ENCODE measurements at regions of chr3 and their contacts with region 1.

Region 1: DNA sequence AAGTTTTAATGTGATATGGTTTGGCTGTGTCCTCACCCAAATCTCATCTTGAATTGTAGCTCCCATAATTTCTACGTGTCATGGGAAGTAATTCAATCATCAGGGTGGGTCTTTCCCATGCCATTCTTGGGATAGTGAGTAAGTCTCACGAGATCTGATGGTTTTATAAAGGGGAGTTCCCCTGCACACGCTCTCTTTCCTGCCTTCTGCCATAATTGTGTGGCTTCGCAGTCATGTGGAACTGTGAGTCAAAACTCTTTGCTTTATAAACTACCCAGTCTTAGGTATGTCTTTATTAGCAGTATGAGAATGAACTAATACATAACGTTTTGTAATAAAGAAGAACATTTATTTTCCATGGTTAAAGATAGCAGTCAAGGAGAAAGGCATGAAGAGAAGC is 39.2 kb upstream of the GOLIM4 start:
- DNase-seq: peak; percentile 3
- ATAC-seq: no peak
- H3K4me3 ChIP-seq: no peak overlapping the region
- H3K27ac ChIP-seq: no peak overlapping the region
- H3K4me1 ChIP-seq: 0 out of 2 replicates have a peak, but pooled peaks cover 1% of the 10 kb centered on the region
- H3K27me3 ChIP-seq: no peaks in the 10 kb centered on the region
- CTCF ChIP-seq: no peak
- POLR2A ChIP-seq: no peak
- RAD21 ChIP-seq: no peak

Region 2: DNA sequence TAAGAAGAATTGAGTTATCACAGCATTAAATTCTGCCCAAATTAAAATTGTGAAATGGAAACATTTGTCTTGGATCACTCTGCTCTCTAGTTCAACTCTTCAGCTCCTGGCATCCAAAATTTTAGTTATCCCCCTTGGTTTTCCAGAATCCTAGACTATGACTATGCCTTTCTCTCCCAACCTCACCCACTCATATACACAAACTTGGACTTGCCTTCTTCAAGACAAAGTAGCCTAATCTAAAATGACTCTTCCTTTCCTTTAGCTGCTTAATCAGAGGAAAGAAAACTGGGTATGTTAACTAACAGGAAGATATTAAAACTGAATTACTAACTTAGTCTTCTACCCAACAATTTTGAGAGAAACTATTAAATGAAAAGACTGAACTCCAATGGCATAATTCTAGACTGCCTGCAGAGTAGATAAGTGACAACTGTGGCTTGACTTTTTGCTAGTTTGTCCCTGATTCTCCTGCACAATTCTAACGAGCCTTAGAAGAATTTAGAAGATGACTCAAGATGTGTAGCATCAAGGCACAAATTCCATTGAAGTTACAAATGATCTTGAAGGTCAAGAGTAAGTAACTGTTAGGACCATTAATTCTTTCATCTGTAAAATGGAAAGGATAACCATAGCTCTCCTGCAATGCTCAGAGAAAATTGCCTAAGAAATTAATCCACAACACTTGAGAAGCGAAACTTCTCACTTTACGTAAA is 34.0 kb before region 1 on chr3:
- CTCF ChIA-PET with region 1: no interaction called
- POLR2A ChIA-PET with region 1: no interaction called
- dilution Hi-C with region 1: no loop called
- in situ Hi-C with region 1: no loop called
- intact Hi-C with region 1: loop called (anchors 5 kb)
- DNase-seq: peak; percentile 56
- ATAC-seq: peak; percentile 36
- H3K4me3 ChIP-seq: no peak overlapping the region
- H3K27ac ChIP-seq: no peak overlapping the region
- H3K4me1 ChIP-seq: no peaks in the 10 kb centered on the region
- H3K27me3 ChIP-seq: no peaks in the 10 kb centered on the region
- CTCF ChIP-seq: no peak
- POLR2A ChIP-seq: no peak
- RAD21 ChIP-seq: no peak

Region 3: DNA sequence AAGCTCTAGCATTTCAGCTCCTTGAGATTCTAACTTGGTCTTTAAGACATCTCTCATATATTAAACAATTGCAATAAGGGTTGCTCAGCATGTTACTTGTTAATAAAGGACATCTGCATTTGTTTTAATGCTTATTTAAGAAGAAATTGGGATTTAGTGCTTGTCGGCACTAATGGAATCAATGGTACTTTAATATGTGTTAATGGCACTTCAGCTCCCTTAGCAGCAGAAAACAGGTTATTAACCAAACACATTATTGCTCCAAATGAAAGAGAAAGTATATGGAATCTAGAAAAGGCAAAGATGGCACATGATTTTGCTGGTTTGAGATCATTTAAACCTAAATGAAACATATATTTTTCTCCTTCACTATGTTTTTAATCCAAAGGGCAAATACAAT is 98.1 kb after region 1 on chr3:
- CTCF ChIA-PET with region 1: no interaction called
- POLR2A ChIA-PET with region 1: no interaction called
- dilution Hi-C with region 1: no loop called
- in situ Hi-C with region 1: no loop called
- intact Hi-C with region 1: no loop called
- DNase-seq: no peak
- ATAC-seq: no peak
- H3K4me3 ChIP-seq: no peak overlapping the region
- H3K27ac ChIP-seq: no peak overlapping the region
- H3K4me1 ChIP-seq: no peaks in the 10 kb centered on the region
- H3K27me3 ChIP-seq: peaks cover 2% of the 10 kb centered on the region
- CTCF ChIP-seq: no peak
- POLR2A ChIP-seq: no peak
- RAD21 ChIP-seq: no peak

Region 4: DNA sequence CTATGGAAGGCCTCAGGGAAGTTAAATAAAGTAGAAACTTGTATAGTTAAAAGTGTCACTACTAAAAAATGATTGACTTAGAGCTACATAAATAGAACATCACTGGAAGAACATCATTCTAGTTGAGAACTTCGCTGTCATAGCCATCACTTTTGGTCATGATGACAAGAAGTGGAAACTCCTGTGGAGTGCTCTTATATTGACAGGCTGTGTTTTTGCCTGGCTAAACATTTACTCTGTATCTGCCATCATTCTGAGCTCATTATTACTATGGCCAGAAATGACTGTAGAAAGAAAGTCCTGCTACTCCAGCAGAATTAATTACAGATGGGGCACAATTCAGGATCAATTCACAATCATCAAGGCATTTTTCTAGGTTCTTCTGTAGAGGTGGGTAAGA is 125.9 kb after region 1 on chr3:
- CTCF ChIA-PET with region 1: no interaction called
- POLR2A ChIA-PET with region 1: no interaction called
- dilution Hi-C with region 1: no loop called
- in situ Hi-C with region 1: no loop called
- intact Hi-C with region 1: no loop called
- DNase-seq: no peak
- ATAC-seq: no peak
- H3K4me3 ChIP-seq: no peak overlapping the region
- H3K27ac ChIP-seq: no peak overlapping the region
- H3K4me1 ChIP-seq: no peaks in the 10 kb centered on the region
- H3K27me3 ChIP-seq: no peaks in the 10 kb centered on the region
- CTCF ChIP-seq: no peak
- POLR2A ChIP-seq: no peak
- RAD21 ChIP-seq: no peak

Measured in IMR-90 (cell line).